Naive thymus-derived CD4-positive, alpha-beta T cell (primary cell): ENCODE measurements at regions of chr7 and their contacts with region 1.

Region 1: GRCh38 chr7:155644178-155644970 is at the start of gene RBM33:
- DNase-seq: peak; percentile 74 to 91 (median 84)
- ATAC-seq: peak; percentile 90
- H3K4me3 ChIP-seq: peak within 1 kb of the TSS; percentile 99
- H3K4me3 Mint-ChIP-seq: peak within 1 kb of the TSS; percentile 94 to 100 (median 99)
- H3K27ac ChIP-seq: peak within 1 kb of the TSS; percentile 98
- H3K27ac Mint-ChIP-seq: peak within 1 kb of the TSS; percentile 94 to 100 (median 99)
- H3K4me1 ChIP-seq: peaks cover 22 to 27% of the 10 kb centered on the region in 2 donors
- H3K4me1 Mint-ChIP-seq: peaks cover 30 to 58% (median 49%) of the 10 kb centered on the region in 7 donors
- H3K27me3 ChIP-seq: no peaks in the 10 kb centered on the region
- H3K27me3 Mint-ChIP-seq: peaks cover 0 to 2% (median 0%) of the 10 kb centered on the region in 5 donors
- total RNA-seq, gene RBM33: 90.2 to 177 (median 164) TPM

Region 2: GRCh38 chr7:155618708-155619633 is 25.4 kb before region 1 on chr7:
- CTCF ChIA-PET with region 1: no interaction called
- POLR2A ChIA-PET with region 1: no interaction called
- intact Hi-C with region 1: no loop called
- DNase-seq: no peak
- ATAC-seq: no peak
- H3K4me3 ChIP-seq: no peak overlapping the region
- H3K4me3 Mint-ChIP-seq: no peak overlapping the region
- H3K27ac ChIP-seq: no peak overlapping the region
- H3K27ac Mint-ChIP-seq: peak overlapping the region in 1 of 9 donors; percentile 18
- H3K4me1 ChIP-seq: no peaks in the 10 kb centered on the region
- H3K4me1 Mint-ChIP-seq: no peaks in the 10 kb centered on the region
- H3K27me3 ChIP-seq: no peaks in the 10 kb centered on the region
- H3K27me3 Mint-ChIP-seq: peaks cover 0 to 18% (median 0%) of the 10 kb centered on the region in 5 donors

Region 3: GRCh38 chr7:155660059-155660757 is 15.8 kb after region 1 on chr7:
- CTCF ChIA-PET with region 1: no interaction called
- POLR2A ChIA-PET with region 1: interaction called, 3 read pairs
- intact Hi-C with region 1: loop called (anchors 1 to 2 kb)
- DNase-seq: no peak
- ATAC-seq: no peak
- H3K4me3 ChIP-seq: no peak overlapping the region
- H3K4me3 Mint-ChIP-seq: peak overlapping the region in 6 of 10 donors; percentile 1 to 68 (median 46)
- H3K27ac ChIP-seq: no peak overlapping the region
- H3K27ac Mint-ChIP-seq: peak overlapping the region in 1 of 9 donors; percentile 21
- H3K4me1 ChIP-seq: peaks cover 26 to 36% of the 10 kb centered on the region in 2 donors
- H3K4me1 Mint-ChIP-seq: peaks cover 53 to 92% (median 87%) of the 10 kb centered on the region in 7 donors
- H3K27me3 ChIP-seq: no peaks in the 10 kb centered on the region
- H3K27me3 Mint-ChIP-seq: no peaks in the 10 kb centered on the region

Region 4: DNA sequence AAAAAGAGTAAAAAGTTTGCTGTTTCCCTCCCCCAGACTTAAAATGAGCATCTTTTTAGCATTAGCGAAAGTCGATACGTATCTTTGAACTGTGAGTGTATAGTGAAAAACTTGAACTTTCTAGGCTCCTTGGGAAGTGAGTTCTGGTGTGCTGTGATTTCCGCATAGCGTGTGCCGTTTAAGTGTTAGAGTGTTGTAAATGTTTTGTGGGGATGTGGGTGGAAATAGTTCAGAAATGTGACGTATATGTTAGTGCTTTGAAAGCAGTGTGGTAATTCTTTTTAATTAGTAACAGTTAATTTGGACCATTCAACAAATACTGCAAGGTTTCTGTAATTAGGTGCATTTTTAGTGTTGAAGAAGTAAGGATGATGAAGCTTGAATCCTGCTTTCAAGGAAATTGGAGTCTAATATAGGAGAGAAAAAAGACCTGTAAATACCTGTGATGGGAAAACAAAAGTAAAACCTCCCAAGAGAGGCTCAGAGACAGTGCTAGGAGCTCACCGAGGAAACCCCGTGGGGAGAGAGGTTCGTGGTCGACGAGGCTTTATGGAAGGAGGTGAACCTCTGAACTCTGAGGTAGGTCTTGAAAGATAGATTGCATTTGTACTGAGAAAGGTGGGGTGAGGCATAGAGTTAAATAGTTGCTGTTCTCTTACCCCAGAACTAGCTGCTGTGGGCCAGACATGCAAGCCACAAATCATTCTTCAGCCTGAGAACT is 40.9 kb after region 1 on chr7:
- CTCF ChIA-PET with region 1: no interaction called
- POLR2A ChIA-PET with region 1: no interaction called
- intact Hi-C with region 1: loop called in 1 of 2 experiments (anchors 2 kb)
- DNase-seq: peak in 4 of 9 donors; percentile 4 to 16 (median 10)
- ATAC-seq: peak; percentile 48
- H3K4me3 ChIP-seq: no peak overlapping the region
- H3K4me3 Mint-ChIP-seq: peak overlapping the region; percentile 8 to 68 (median 45)
- H3K27ac ChIP-seq: peak overlapping the region; percentile 1
- H3K27ac Mint-ChIP-seq: peak overlapping the region; percentile 1 to 74 (median 19)
- H3K4me1 ChIP-seq: no peaks in the 10 kb centered on the region
- H3K4me1 Mint-ChIP-seq: peaks cover 32 to 83% (median 78%) of the 10 kb centered on the region in 7 donors
- H3K27me3 ChIP-seq: no peaks in the 10 kb centered on the region
- H3K27me3 Mint-ChIP-seq: no peaks in the 10 kb centered on the region

Region 5: DNA sequence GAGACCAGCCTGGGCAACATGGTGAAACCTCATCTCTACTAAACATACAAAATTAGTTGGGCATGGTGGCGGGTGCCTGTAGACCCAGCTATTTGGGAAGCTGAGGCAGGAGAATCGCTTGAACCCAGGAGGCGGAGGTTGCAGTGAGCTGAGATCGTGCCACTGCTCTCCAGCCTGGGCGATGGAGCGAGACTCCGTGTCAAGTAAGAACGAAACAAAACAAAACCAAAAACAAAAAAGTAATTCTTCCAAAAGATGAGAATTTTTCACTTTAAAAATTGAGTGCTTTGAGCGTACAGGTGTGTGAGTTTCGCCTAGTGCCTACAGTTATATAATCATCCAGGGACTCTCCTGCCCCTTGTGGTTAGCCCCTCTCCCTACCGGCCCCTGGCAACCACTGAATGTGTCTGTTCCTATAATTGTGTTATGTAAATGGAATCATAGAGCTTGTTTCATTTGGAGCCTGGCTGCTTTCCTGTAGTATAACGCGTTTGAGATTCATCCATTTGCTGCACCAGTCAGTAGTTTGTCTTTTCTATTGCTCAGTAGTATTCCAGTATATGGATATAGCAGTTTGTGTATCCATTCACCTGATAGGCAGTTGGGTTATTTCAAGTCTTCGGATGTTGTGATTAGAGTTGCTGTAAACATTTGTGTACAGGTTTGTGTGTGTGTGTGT is 80.1 kb after region 1 on chr7:
- CTCF ChIA-PET with region 1: no interaction called
- POLR2A ChIA-PET with region 1: no interaction called
- intact Hi-C with region 1: no loop called
- DNase-seq: no peak
- ATAC-seq: peak; percentile 51
- H3K4me3 ChIP-seq: no peak overlapping the region
- H3K4me3 Mint-ChIP-seq: no peak overlapping the region
- H3K27ac ChIP-seq: no peak overlapping the region
- H3K27ac Mint-ChIP-seq: peak overlapping the region in 4 of 9 donors; percentile 0 to 56 (median 22)
- H3K4me1 ChIP-seq: no peaks in the 10 kb centered on the region
- H3K4me1 Mint-ChIP-seq: peaks cover 11 to 58% (median 43%) of the 10 kb centered on the region in 7 donors
- H3K27me3 ChIP-seq: no peaks in the 10 kb centered on the region
- H3K27me3 Mint-ChIP-seq: no peaks in the 10 kb centered on the region

Region 6: GRCh38 chr7:155738652-155739537 is 94.5 kb after region 1 on chr7:
- CTCF ChIA-PET with region 1: no interaction called
- POLR2A ChIA-PET with region 1: interaction called, 3 read pairs
- intact Hi-C with region 1: loop called in 1 of 2 experiments (anchors 5 kb)
- DNase-seq: peak; percentile 27 to 85 (median 77)
- ATAC-seq: peak; percentile 93
- H3K4me3 ChIP-seq: no peak overlapping the region
- H3K4me3 Mint-ChIP-seq: peak overlapping the region in 9 of 10 donors; percentile 15 to 71 (median 62)
- H3K27ac ChIP-seq: peak overlapping the region; percentile 30
- H3K27ac Mint-ChIP-seq: peak overlapping the region; percentile 24 to 97 (median 87)
- H3K4me1 ChIP-seq: peaks cover 0 to 12% of the 10 kb centered on the region in 2 donors
- H3K4me1 Mint-ChIP-seq: peaks cover 17 to 71% (median 49%) of the 10 kb centered on the region in 7 donors
- H3K27me3 ChIP-seq: no peaks in the 10 kb centered on the region
- H3K27me3 Mint-ChIP-seq: no peaks in the 10 kb centered on the region

Region 7: DNA sequence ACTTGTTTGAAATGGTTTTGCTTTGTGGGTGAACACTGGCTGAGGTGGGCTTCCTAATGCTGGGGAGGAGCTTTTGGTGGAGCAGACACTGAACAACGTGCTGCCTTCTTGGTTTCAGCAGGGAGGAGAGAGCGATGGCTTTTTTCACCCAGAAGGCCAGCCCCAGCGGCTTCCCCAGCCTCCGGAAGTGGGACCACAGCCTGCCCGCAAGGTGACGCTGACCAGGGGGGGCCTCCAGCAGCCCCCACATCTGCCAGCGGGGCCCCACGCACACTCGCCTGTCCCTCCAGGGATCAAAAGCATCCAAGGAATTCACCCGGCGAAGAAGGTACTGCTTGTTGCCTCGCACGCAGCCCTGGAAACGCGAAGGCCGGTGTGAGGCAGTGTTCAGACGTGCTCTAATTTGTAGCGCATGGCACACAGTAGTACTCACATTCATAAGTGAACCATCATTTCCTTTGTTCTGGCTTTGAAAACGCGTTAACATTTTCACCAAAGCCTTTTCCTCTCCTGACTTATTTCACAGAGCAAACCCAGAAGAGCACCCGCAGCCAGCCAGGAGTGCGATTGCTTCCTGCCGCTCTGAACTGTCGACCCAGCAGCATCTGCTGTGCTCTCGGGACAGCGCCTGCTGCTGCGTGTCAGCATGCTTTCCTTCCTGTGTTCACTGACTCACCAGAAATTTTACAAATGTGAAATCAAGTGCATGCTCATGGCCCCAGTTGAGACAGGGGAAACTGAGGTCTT is 119.5 kb after region 1 on chr7:
- CTCF ChIA-PET with region 1: no interaction called
- POLR2A ChIA-PET with region 1: no interaction called
- intact Hi-C with region 1: loop called (anchors 1 kb)
- DNase-seq: peak in 8 of 9 donors; percentile 48 to 73 (median 60)
- ATAC-seq: peak; percentile 80
- H3K4me3 ChIP-seq: peak overlapping the region; percentile 12
- H3K4me3 Mint-ChIP-seq: peak overlapping the region; percentile 64 to 91 (median 80)
- H3K27ac ChIP-seq: peak overlapping the region; percentile 67
- H3K27ac Mint-ChIP-seq: peak overlapping the region; percentile 73 to 98 (median 91)
- H3K4me1 ChIP-seq: peaks cover 24 to 31% of the 10 kb centered on the region in 2 donors
- H3K4me1 Mint-ChIP-seq: peaks cover 39 to 67% (median 61%) of the 10 kb centered on the region in 7 donors
- H3K27me3 ChIP-seq: no peaks in the 10 kb centered on the region
- H3K27me3 Mint-ChIP-seq: no peaks in the 10 kb centered on the region

Region 8: DNA sequence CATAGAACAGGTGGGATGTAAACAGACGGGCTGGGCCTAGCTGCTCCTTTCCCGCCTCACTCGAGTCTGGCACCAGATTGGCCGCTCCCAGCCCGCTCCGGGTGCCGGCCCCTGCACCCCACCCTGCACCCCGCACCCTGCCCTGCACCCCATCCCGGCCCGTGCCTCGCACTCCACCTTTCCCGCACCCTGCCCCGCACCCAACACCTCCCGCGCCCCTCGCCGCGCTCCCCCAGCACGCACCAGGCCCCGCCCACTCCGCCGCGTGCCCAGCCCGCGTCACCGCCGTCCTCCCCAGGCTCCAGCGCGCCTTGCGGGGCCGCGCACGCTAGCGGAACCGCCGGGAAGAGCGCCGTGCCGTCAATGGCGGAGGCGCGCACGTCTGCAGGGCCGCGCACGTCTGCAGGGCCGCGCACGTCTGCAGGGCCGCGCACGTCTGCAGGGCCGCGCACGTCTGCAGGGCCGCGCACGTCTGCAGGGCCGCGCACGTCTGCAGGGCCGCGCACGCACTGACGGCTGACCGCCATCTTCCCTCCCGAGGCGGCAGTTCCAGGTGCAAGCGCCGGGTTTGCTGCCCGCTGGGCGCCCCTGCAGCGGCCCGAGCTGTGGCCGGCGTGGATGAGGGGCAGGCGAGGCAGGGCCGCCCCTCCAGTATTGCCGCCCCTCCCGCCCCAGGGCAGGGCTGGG is 1494.2 kb after region 1 on chr7 and contains the start of gene UBE3C:
- CTCF ChIA-PET with region 1: no interaction called
- POLR2A ChIA-PET with region 1: no interaction called
- intact Hi-C with region 1: loop called (anchors 5 kb)
- DNase-seq: peak; percentile 88 to 96 (median 93)
- ATAC-seq: peak; percentile 91
- H3K4me3 ChIP-seq: peak within 1 kb of the TSS; percentile 82
- H3K4me3 Mint-ChIP-seq: peak within 1 kb of the TSS; percentile 77 to 93 (median 84)
- H3K27ac ChIP-seq: peak within 1 kb of the TSS; percentile 92
- H3K27ac Mint-ChIP-seq: peak within 1 kb of the TSS; percentile 76 to 99 (median 93)
- H3K4me1 ChIP-seq: peaks cover 35 to 43% of the 10 kb centered on the region in 2 donors
- H3K4me1 Mint-ChIP-seq: peaks cover 26 to 45% (median 42%) of the 10 kb centered on the region in 7 donors
- H3K27me3 ChIP-seq: no peaks in the 10 kb centered on the region
- H3K27me3 Mint-ChIP-seq: peaks cover 0 to 2% (median 0%) of the 10 kb centered on the region in 5 donors
- total RNA-seq, gene UBE3C: 41.6 to 64.6 (median 54.9) TPM